GM12878 (cell line): ENCODE measurements at regions of chr15 and their contacts with region 1.

Region 1: GRCh38 chr15:63146669-63147068 is 10.6 kb downstream of the RPS27L start:
- DNase-seq: no peak
- ATAC-seq: no peak
- H3K4me3 ChIP-seq: no peak overlapping the region
- H3K27ac ChIP-seq: no peak overlapping the region
- H3K4me1 ChIP-seq: no peaks in the 10 kb centered on the region
- H3K27me3 ChIP-seq: no peaks in the 10 kb centered on the region
- CTCF ChIP-seq: peak in 2 of 3 experiments; percentile 8 to 28; a peak in 2 of 6 replicates
- EP300 ChIP-seq: no peak
- POLR2A ChIP-seq: no peak
- RAD21 ChIP-seq: peak; percentile 33; the same call in 1 of the 2 replicates

Region 2: DNA sequence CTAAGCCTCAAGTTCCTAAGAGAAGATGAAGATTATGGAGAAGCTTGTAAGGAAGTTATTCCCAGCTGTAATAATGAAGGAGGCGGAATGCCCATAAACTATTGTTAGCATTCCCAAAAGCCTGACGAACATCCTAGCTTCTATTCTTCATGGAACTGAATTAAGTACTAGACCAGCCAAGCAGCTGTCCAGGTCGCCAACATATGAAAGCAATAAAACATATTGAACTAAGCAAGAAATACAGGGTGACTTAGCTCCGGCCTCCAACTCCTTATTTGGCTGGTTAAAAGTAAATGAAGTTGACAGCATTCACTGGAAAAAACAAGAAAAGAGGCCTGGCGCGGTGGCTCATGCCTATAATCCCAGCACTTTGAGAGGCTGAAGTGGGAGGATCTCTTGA is 278.2 kb before region 1 on chr15:
- CTCF ChIA-PET with region 1: no interaction called
- POLR2A ChIA-PET with region 1: no interaction called
- RAD21 ChIA-PET with region 1: no interaction called
- SMC1A ChIA-PET with region 1: no interaction called
- in situ Hi-C with region 1: no loop called
- intact Hi-C with region 1: no loop called
- DNase-seq: no peak
- ATAC-seq: no peak
- H3K4me3 ChIP-seq: no peak overlapping the region
- H3K27ac ChIP-seq: no peak overlapping the region
- H3K4me1 ChIP-seq: no peaks in the 10 kb centered on the region
- H3K27me3 ChIP-seq: no peaks in the 10 kb centered on the region; a peak in 1 of 4 replicates
- CTCF ChIP-seq: no peak
- EP300 ChIP-seq: no peak
- POLR2A ChIP-seq: no peak
- RAD21 ChIP-seq: no peak

Region 3: DNA sequence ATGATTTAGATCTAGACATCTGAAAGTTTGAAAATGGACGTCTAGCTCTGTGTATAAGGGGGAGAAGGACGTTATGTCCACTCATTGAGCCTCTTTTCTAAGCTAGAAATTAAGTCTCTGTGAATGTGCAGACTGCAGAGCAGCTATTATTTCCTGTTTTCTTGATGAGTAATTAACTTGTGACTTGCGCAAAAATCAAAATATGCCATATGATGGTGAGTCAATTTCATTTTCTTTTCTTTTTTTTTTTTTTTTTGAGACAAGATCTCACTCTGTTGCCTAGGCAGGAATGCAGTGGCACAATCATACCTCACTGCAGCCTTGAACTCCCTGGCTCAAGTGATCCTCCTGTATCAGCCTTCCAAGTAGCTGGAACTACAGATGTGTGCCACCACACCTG is 10.9 kb before region 1 on chr15:
- CTCF ChIA-PET with region 1: interaction called, 8 read pairs
- POLR2A ChIA-PET with region 1: interaction called, 3 read pairs
- RAD21 ChIA-PET with region 1: interaction called, 4 read pairs
- SMC1A ChIA-PET with region 1: interaction called, 21 read pairs
- in situ Hi-C with region 1: no loop called
- intact Hi-C with region 1: no loop called
- DNase-seq: no peak
- ATAC-seq: no peak
- H3K4me3 ChIP-seq: no peak overlapping the region
- H3K27ac ChIP-seq: no peak overlapping the region
- H3K4me1 ChIP-seq: no peaks in the 10 kb centered on the region
- H3K27me3 ChIP-seq: no peaks in the 10 kb centered on the region
- CTCF ChIP-seq: no peak
- EP300 ChIP-seq: no peak
- POLR2A ChIP-seq: no peak
- RAD21 ChIP-seq: no peak